OCI-LY7 (cell line): ENCODE measurements at regions of chr14 and their contacts with region 1.

Region 1: GRCh38 chr14:51846631-51847488 is 13.6 kb upstream of the GNG2 start:
- DNase-seq: peak; percentile 96
- H3K4me3 ChIP-seq: peak overlapping the region; percentile 66
- H3K27ac ChIP-seq: peak overlapping the region; percentile 97
- H3K4me1 ChIP-seq: peaks cover 69% of the 10 kb centered on the region
- CTCF ChIP-seq: no peak; the same call in 1 of the 2 replicates

Region 2: DNA sequence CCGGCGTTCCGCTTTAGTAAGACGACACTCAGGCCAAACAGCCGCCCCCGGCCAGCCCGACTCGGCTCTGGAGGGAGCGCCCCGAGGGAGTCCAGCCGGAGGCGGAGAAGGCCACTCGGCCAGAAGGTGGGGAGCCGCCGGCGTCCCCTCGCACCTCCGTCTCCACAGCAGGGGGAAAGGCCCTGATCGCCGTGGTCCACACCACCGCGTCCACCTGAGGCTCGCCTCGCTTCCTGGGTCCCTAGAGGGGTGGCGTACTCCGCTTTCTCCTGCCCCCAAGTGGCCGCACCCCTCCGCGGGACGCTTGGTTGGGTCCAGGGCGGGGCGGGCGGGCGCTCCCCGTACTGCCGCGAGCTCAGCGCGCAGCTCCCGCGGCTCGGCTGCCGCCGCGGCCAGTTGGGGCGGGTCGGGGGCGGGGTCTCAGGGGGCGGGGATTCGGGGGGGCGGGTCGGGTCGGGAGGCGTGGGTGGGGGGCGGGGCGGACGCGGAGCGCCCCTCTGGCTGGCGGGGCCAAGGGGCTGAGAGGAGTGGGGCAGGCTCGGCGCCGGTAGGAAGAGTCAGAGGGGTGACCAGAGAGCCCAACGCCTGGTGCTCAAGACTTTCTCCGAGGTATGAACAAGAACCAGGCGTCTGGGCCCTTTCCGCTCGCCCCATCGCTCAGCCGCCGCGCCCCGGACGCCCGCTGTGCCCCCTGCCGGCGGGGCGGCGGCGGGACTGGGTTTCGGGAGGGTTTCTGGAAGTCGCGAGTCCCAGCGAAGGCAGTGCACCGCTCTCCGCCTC is 195.3 kb before region 1 on chr14 and contains the start of gene FRMD6:
- CTCF ChIA-PET with region 1: no interaction called
- POLR2A ChIA-PET with region 1: no interaction called
- intact Hi-C with region 1: loop called (anchors 2 kb)
- DNase-seq: peak; percentile 88
- H3K4me3 ChIP-seq: peak within 1 kb of the TSS; percentile 87
- H3K27ac ChIP-seq: peak within 1 kb of the TSS; percentile 78
- H3K4me1 ChIP-seq: peaks cover 31% of the 10 kb centered on the region
- CTCF ChIP-seq: peak; percentile 78
- total RNA-seq, gene FRMD6: 7.6 and 12.3 TPM in 2 replicates

Region 3: GRCh38 chr14:51860164-51860824 is 13.4 kb after region 1 on chr14 and contains the start of gene GNG2:
- CTCF ChIA-PET with region 1: interaction called, 4 read pairs
- POLR2A ChIA-PET with region 1: interaction called, 55 read pairs
- intact Hi-C with region 1: loop called (anchors 1 kb)
- DNase-seq: peak; percentile 89
- H3K4me3 ChIP-seq: peak within 1 kb of the TSS; percentile 70
- H3K27ac ChIP-seq: peak within 1 kb of the TSS; percentile 59
- H3K4me1 ChIP-seq: peaks cover 28% of the 10 kb centered on the region
- CTCF ChIP-seq: no peak
- total RNA-seq, gene GNG2: 22.3 and 24.0 TPM in 2 replicates

Region 4: DNA sequence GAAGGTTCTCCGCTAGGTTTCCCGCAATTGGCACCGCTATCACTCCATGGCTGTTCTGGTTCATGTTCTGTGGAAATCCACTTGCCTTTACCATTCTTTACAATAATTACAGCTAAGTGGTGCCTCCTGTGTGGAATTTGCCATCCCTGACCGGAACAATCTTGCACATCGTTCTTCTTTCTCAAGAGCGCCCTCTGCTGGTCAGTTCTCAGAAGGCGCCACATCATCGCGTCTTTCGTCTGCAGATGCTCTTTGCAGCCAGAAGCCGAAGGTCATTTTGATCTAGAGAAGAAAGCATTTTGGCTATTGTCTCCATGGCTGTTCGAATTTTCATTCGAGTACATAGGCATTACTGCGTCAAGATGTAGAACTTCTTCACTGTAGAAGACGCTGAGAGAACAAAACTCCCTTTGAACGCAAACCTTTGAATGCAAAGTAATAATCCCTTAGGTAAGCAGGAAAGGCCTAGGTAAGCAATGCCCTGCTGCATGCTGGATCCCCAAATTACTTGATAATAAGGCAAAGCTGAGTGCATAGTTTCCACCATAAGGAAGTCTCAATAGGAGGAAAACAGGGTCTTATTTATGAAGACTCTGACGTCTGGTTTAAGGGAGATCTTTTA is 132.3 kb after region 1 on chr14:
- CTCF ChIA-PET with region 1: no interaction called
- POLR2A ChIA-PET with region 1: no interaction called
- intact Hi-C with region 1: loop called (anchors 2 kb)
- DNase-seq: peak; percentile 73
- H3K4me3 ChIP-seq: no peak overlapping the region
- H3K27ac ChIP-seq: no peak overlapping the region
- H3K4me1 ChIP-seq: no peaks in the 10 kb centered on the region
- CTCF ChIP-seq: peak; percentile 98